ENCODE measurements at regions of chr3 and their contacts with region 1.

Region 1: GRCh38 chr3:139414608-139415224 is 25.3 kb upstream of the COPB2 start:
- DNase-seq: no peak
- ATAC-seq: peak; percentile 88
- H3K4me3 ChIP-seq: no peak overlapping the region
- H3K27ac ChIP-seq: no peak overlapping the region
- H3K4me1 ChIP-seq: peaks cover 10% of the 10 kb centered on the region
- H3K27me3 ChIP-seq: no peaks in the 10 kb centered on the region
- CTCF ChIP-seq: no peak
- EP300 ChIP-seq: no peak
- POLR2A ChIP-seq: no peak
- RAD21 ChIP-seq: no peak

Region 2: DNA sequence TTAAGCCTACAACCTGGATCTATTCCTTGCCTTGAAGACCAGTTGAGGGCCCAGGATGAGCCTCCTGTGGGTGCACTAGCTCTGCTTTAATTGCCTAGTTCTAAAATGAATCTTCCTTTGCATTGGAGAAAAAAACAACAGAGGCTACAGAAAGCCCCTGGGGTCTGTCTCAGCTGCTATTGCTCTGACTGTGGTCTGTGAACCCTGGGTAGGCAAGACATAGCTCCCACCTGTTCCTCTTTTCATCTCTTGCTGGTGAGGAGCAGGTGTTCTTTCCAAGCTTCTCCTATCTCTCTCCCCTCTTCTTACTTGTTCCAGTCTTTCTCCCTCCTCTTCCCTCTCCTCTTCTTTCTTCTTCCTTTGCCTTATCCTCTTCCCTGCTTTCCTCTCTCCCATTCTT is 32.8 kb after region 1 on chr3:
- CTCF ChIA-PET with region 1: no interaction called
- POLR2A ChIA-PET with region 1: no interaction called
- in situ Hi-C with region 1: no loop called
- intact Hi-C with region 1: loop called (anchors 1 kb)
- DNase-seq: no peak
- ATAC-seq: no peak
- H3K4me3 ChIP-seq: no peak overlapping the region
- H3K27ac ChIP-seq: no peak overlapping the region
- H3K4me1 ChIP-seq: peaks cover 20% of the 10 kb centered on the region
- H3K27me3 ChIP-seq: no peaks in the 10 kb centered on the region
- CTCF ChIP-seq: no peak
- EP300 ChIP-seq: no peak
- POLR2A ChIP-seq: no peak
- RAD21 ChIP-seq: no peak

Region 3: DNA sequence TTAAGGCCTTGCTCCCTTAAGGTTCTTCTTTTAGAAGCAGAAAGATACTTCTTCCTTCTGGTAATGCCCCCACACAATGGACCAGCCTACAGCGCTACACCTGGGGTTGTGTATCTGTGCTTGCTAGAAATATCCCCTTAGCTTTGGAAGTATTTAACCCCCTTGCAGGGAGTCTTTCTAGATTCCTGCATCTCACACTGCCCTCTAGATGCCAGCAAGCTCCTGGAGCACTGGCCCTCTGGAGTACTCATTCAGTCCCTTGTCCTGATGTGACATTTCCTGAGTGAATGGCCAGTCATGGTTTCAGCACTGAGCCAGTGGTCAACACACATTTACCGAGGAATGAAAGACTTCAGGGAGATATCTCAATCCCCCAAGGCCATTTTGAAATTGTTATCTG is 92.0 kb after region 1 on chr3:
- CTCF ChIA-PET with region 1: no interaction called
- POLR2A ChIA-PET with region 1: no interaction called
- in situ Hi-C with region 1: no loop called
- intact Hi-C with region 1: no loop called
- DNase-seq: peak; percentile 9
- ATAC-seq: peak; percentile 81
- H3K4me3 ChIP-seq: no peak overlapping the region
- H3K27ac ChIP-seq: no peak overlapping the region
- H3K4me1 ChIP-seq: peaks cover 24% of the 10 kb centered on the region
- H3K27me3 ChIP-seq: no peaks in the 10 kb centered on the region; a peak in 1 of 5 replicates
- CTCF ChIP-seq: peak; percentile 46
- EP300 ChIP-seq: no peak
- POLR2A ChIP-seq: no peak
- RAD21 ChIP-seq: no peak